ENCODE measurements at regions of chr1 and their contacts with region 1.

Region 1: GRCh38 chr1:200888349-200888838 is 6.3 kb upstream of the INAVA start:
- DNase-seq: peak; percentile 39
- ATAC-seq: peak; percentile 93
- H3K4me3 Mint-ChIP-seq: peak overlapping the region; percentile 21
- H3K27ac Mint-ChIP-seq: peak overlapping the region; percentile 70
- H3K4me1 Mint-ChIP-seq: peaks cover 58% of the 10 kb centered on the region
- H3K27me3 Mint-ChIP-seq: peaks cover 5% of the 10 kb centered on the region
- CTCF ChIP-seq: no peak

Region 2: GRCh38 chr1:200866521-200866920 is 21.9 kb before region 1 on chr1:
- CTCF ChIA-PET with region 1: no interaction called
- POLR2A ChIA-PET with region 1: interaction called, 17 read pairs
- intact Hi-C with region 1: loop called (anchors 2 kb)
- DNase-seq: no peak
- ATAC-seq: peak; percentile 67
- H3K4me3 Mint-ChIP-seq: no peak overlapping the region
- H3K27ac Mint-ChIP-seq: no peak overlapping the region
- H3K4me1 Mint-ChIP-seq: peaks cover 64% of the 10 kb centered on the region
- H3K27me3 Mint-ChIP-seq: peaks cover 3% of the 10 kb centered on the region
- CTCF ChIP-seq: no peak

Region 3: GRCh38 chr1:200877839-200878551 is 10.4 kb before region 1 on chr1:
- CTCF ChIA-PET with region 1: interaction called, 4 read pairs
- POLR2A ChIA-PET with region 1: interaction called, 15 read pairs
- intact Hi-C with region 1: no loop called
- DNase-seq: no peak
- ATAC-seq: peak; percentile 58
- H3K4me3 Mint-ChIP-seq: no peak overlapping the region
- H3K27ac Mint-ChIP-seq: no peak overlapping the region
- H3K4me1 Mint-ChIP-seq: peaks cover 30% of the 10 kb centered on the region
- H3K27me3 Mint-ChIP-seq: peaks cover 12% of the 10 kb centered on the region
- CTCF ChIP-seq: no peak

Region 4: DNA sequence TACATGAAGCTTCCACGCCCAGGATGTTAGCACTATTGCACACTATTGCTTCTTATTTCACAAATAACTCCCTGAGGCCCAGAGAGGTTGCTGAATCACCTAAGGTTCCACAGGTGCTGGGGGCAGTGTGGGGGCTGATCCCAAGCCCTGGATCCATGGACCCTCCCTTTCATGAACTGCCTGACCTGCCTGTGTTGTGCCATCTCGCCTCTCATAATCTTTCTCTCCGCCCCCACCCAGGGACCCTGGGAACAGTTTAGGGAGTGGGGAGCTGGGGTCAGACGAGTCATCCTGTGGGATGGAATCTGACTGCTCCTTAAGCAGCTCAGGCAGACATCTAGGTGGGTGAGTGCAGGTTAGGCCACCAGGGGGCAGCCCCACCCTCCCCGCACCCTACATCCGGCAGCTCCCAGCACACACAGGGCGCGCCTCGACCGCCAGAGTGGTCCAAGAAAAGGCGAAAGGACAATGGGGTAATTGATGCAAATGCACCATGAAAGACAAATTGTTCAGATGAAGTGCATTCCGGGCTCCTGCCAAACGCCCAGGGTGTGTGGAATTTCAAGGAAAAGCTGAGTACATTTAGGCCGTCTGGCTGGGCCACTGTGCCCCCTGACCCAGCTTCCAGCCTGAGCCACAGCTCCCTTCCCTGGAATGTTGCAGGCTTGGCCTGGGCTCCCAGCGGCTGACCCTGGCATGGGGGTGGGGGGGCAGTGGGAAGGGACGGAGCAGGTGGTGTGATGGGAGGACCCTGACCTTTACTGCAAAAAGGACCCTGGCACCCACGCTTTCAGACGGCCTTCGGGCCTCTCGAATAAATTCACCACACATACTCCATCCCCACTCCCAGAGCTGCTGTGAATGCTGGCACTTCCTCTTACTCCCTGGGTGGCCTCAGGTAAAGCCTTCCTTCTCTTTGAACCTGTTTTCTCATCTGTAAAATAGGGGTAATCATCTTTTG is 559.8 kb after region 1 on chr1:
- CTCF ChIA-PET with region 1: no interaction called
- POLR2A ChIA-PET with region 1: no interaction called
- intact Hi-C with region 1: no loop called
- DNase-seq: peak; percentile 30
- ATAC-seq: peak; percentile 89
- H3K4me3 Mint-ChIP-seq: no peak overlapping the region
- H3K27ac Mint-ChIP-seq: no peak overlapping the region
- H3K4me1 Mint-ChIP-seq: peaks cover 9% of the 10 kb centered on the region
- H3K27me3 Mint-ChIP-seq: peaks cover 12% of the 10 kb centered on the region
- CTCF ChIP-seq: no peak